Thyroid gland (tissue), 4 donors: ENCODE measurements at regions of chr19 and their contacts with region 1.

Region 1: DNA sequence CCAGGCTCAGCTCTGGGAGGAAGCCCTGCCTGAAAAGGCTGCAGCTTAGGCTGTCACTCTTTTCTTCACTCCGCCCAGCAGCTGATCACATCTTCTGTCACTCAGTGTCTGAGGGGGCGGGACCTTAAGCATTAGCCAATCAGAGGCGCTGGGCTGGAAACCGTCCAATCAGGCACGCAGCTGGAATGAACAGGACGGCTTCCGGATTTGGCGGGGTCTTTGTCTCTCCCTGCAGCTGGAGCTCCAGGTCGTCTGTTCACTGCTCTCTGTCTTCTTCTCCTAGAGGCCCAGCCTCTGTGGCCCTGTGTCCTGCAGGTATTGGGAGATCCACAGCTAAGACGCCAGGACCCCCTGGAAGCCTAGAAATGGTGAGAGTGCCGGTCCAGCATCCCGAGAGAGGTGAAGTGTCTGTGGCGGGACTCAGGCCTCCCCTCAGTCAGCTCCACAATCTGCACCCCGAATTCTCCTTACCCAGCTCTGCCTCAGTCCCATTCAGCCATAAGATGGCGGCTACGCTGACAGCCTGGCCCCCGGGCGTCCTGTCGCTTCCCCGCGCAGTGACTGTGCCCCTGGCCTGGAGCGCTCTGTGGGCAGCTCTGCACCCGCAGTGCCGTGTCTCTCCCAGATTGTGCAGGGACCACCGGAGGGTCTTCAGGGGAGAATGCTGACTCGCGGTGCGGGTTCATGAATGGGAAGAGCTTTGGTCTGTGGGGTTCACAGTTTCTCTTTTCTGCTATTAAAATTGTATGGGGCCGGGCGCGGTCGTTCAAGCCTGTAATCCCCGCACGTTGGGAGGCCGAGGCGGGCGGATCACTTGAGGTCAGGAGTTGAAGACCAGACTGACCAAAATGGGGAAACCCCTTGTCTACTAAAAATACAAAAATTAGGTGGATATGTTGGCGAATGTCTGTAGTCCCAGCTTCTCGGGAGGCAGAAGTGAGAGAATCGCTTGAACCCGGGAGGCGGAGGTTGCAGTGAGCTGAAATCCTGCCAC is at the start of gene ZNF66:
- DNase-seq: peak; percentile 99
- H3K4me3 ChIP-seq: peak within 1 kb of the TSS; percentile 39 to 85 (median 75)
- H3K27ac ChIP-seq: peak within 1 kb of the TSS in 1 of 3 donors; percentile 58
- H3K4me1 ChIP-seq: no peaks in the 10 kb centered on the region
- H3K27me3 ChIP-seq: no peaks in the 10 kb centered on the region
- CTCF ChIP-seq: no peak
- POLR2A ChIP-seq: peak in 1 of 2 donors; percentile 79
- total RNA-seq, gene ZNF66: 12.3 to 22.1 (median 14.4) TPM

Region 2: DNA sequence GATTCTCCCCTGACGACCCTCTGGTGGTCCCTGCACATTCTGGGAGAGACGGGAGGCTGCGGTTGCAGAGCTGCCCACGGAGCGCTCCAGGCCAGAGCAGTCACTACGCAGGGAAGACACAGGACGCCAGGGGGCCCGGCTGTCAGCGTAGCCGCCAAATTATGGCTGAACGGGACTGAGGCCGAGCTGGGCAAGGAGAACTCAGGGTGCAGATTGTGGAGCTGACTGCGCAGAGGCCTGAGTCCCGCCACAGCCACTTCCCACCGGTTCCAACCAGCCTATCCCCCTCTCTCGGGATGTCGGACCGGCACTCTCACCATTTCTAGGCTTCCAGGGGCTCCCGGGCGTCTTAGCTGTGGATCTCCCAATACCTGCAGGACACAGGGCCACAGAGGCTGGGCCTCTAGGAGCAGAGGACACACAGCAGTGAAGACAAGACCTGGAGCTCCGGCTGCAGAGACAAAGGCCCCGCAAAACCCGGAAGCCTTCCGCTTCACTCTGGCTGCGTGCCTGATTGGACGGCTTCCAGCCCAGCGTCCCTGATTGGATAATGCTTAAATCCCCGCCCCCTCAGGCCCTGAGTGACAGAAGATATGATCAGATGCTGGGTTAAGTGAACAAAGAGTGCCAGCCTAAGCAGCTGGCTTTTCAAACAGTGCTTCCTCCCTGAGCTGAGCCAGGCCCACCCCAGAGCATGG is 210.9 kb before region 1 on chr19 and contains the start of gene ZNF737:
- intact Hi-C with region 1: loop called (anchors 10 kb)
- DNase-seq: peak; percentile 99 to 100
- H3K4me3 ChIP-seq: peak within 1 kb of the TSS; percentile 35 to 59 (median 40)
- H3K27ac ChIP-seq: peak within 1 kb of the TSS; percentile 74 to 94 (median 81)
- H3K4me1 ChIP-seq: peaks cover 28% of the 10 kb centered on the region in 2 donors
- H3K27me3 ChIP-seq: no peaks in the 10 kb centered on the region
- CTCF ChIP-seq: peak in 3 of 6 experiments; percentile 33 to 42 (median 40)
- POLR2A ChIP-seq: peak; percentile 42 to 94
- total RNA-seq, gene ZNF737: 59.3 to 114 (median 72.5) TPM